A549 (cell line): ENCODE measurements at regions of chr2 and their contacts with region 1.

Region 1: GRCh38 chr2:39227628-39228412 is 15.9 kb downstream of the CDKL4 start:
- DNase-seq: peak; percentile 76 to 79
- ATAC-seq: peak; percentile 84 to 92
- H3K4me3 ChIP-seq: no peak overlapping the region
- H3K27ac ChIP-seq: peak overlapping the region; percentile 19 to 26; a peak in 2 of 6 replicates
- H3K4me1 ChIP-seq: no peaks in the 10 kb centered on the region
- CTCF ChIP-seq: peak; percentile 97
- EP300 ChIP-seq: no peak
- POLR2A ChIP-seq: no peak
- RAD21 ChIP-seq: peak; percentile 85 to 88

Region 2: DNA sequence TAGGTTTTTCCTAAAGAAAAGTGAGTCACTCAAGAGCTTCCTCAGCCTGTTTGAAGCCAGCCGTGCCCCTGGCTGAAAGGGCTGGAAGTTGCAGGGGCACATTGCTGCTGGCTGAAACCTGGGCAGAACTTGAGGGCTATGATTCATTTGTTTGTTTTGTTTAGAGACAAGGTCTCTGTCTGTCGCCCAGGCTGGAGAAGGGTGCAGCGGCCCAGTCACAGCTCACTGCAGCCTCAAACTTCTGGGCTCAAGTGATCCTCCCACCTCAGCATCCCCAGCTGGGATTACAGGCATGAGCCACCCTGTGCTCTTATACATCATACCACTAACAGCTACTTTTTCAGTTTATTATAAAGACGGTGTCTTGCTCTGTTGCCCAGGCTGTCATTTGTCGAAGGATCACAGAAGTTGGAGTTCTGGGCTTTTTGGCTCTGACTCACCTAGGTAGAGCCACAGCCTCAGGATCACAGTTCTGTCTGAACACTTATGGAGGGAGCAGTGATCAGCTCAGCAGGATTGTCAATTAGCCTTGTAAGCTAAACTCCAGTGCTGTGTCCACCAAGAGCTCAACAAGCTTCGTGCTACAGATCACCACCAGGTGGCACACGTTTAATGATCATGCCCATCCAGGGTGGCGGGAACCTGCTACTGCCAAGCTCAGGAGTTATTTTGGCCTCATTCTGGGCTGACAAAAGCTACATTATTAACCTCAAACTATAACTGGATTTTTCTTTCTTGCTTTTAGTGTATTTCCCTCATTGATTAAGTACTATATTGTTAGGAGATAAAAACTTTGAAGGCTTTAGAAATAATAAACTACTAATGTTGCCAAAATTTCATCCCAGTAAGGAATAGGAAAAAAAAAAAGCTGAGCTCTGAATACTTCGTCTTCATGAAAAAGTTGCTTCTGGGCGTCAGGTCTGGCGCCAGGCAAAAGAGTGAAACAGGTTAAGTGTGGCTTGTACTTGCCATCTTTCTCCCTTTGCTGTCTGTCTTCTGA is 280.3 kb before region 1 on chr2:
- CTCF ChIA-PET with region 1: interaction called, 97 read pairs
- POLR2A ChIA-PET with region 1: no interaction called
- DNase-seq: peak; percentile 91 to 95
- ATAC-seq: peak; percentile 95 to 98
- H3K4me3 ChIP-seq: no peak overlapping the region
- H3K27ac ChIP-seq: peak overlapping the region; percentile 23 to 70; a peak in 5 of 6 replicates
- H3K4me1 ChIP-seq: peaks cover 15% of the 10 kb centered on the region
- CTCF ChIP-seq: peak; percentile 92
- EP300 ChIP-seq: no peak
- POLR2A ChIP-seq: no peak
- RAD21 ChIP-seq: peak; percentile 76 to 84

Region 3: GRCh38 chr2:39039072-39039471 is 188.7 kb before region 1 on chr2:
- CTCF ChIA-PET with region 1: interaction called, 11 read pairs
- POLR2A ChIA-PET with region 1: no interaction called
- DNase-seq: no peak
- ATAC-seq: no peak
- H3K4me3 ChIP-seq: no peak overlapping the region
- H3K27ac ChIP-seq: no peak overlapping the region
- H3K4me1 ChIP-seq: no peaks in the 10 kb centered on the region
- CTCF ChIP-seq: no peak
- EP300 ChIP-seq: no peak
- POLR2A ChIP-seq: no peak
- RAD21 ChIP-seq: no peak

Region 4: DNA sequence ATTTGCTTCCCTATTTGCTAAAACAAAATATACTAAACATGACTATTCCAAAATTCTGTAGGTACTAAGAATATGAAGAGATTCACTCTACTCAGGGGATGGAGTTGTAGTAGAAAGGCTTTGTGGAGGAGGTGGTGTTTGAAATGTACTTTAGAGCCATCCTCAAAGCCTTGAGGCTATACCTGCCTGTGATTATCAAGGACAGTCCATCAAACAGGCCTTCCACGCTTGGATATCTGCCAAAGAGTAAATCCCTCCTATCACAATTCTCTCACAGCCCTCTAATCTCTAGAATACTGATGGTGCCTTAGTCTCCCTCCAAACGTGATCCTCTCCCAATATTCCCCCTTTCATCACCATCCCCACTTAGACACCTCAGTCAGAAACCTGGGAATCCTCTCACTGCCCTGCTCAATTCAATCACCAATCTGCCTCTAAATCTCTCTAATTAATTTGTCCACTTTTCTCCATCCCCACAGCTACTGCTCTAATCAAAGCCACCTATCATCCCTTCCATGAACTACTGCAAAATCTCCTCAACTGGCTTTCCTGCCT is 120.0 kb before region 1 on chr2:
- CTCF ChIA-PET with region 1: interaction called, 15 read pairs
- POLR2A ChIA-PET with region 1: no interaction called
- DNase-seq: no peak
- ATAC-seq: peak; percentile 35 to 50; a peak in 4 of 6 replicates
- H3K4me3 ChIP-seq: no peak overlapping the region
- H3K27ac ChIP-seq: no peak overlapping the region
- H3K4me1 ChIP-seq: peaks cover 15% of the 10 kb centered on the region
- CTCF ChIP-seq: no peak
- EP300 ChIP-seq: no peak
- POLR2A ChIP-seq: no peak
- RAD21 ChIP-seq: no peak

Region 5: DNA sequence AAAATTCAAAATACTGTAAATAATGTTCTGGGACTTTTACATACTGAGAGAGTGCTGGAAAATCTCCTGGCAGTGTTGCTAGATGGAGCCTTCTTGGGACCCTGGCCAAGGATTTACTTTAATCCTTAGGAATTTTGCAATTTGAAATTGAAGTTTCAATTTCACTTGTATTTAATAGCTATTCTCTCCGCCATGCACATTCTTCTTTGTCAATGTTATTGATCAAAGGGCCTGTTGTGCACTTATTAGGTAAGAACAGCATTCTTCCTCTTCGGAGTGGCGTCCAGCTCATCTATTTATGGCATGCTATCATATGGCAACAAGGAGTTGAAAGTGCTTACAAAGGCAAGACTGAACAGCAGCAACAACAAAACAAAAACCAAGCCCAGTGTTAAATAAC is 66.8 kb before region 1 on chr2:
- CTCF ChIA-PET with region 1: interaction called, 10 read pairs
- POLR2A ChIA-PET with region 1: no interaction called
- DNase-seq: no peak
- ATAC-seq: no peak
- H3K4me3 ChIP-seq: no peak overlapping the region
- H3K27ac ChIP-seq: no peak overlapping the region
- H3K4me1 ChIP-seq: no peaks in the 10 kb centered on the region
- CTCF ChIP-seq: no peak
- EP300 ChIP-seq: no peak
- POLR2A ChIP-seq: no peak
- RAD21 ChIP-seq: no peak

Region 6: DNA sequence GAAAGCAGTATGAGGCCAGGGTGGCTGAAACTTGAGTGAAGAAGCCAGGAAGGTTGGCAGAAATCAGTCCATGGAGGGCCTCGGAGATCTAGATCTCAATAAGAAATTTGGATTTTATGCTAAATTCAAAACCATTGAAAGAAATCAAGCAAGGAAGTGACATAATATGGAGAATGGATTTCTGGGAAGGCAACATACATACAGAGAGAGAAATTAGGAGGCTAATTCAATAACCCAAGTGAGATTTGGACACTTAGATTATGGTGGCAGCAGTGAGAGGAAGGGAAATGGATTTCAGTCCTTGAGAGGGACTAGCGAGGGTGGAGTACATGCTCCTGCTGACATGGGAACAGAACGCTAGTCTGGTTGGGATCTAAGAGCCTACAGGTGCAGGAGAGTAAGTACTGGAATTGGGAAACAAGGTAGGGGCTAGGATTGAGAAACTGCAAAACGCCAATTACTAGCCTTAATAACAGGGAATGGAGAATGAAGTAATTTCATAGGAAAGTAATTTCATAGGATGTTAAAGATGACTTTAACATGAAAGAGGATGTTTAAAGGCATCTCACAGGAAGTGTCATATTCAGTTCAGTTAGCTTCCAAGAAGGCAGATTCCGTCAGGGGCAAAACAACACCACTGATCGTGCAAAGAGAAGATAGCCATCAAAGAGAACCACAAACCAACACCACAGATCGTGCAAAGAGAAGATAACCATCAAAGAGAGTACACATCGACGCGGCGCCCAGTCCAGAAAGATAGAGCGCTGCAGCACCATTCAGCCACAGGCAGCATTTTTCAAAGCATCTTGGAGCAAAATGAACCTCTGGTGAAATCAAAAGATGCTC is 11.3 kb before region 1 on chr2:
- CTCF ChIA-PET with region 1: interaction called, 33 read pairs
- POLR2A ChIA-PET with region 1: no interaction called
- DNase-seq: no peak
- ATAC-seq: no peak
- H3K4me3 ChIP-seq: no peak overlapping the region
- H3K27ac ChIP-seq: no peak overlapping the region
- H3K4me1 ChIP-seq: no peaks in the 10 kb centered on the region
- CTCF ChIP-seq: no peak
- EP300 ChIP-seq: no peak
- POLR2A ChIP-seq: no peak
- RAD21 ChIP-seq: no peak

Region 7: GRCh38 chr2:39436592-39437510 is 209.0 kb after region 1 on chr2 and contains the start of gene MAP4K3:
- CTCF ChIA-PET with region 1: no interaction called
- POLR2A ChIA-PET with region 1: no interaction called
- DNase-seq: peak; percentile 90 to 97
- ATAC-seq: peak; percentile 89
- H3K4me3 ChIP-seq: peak within 1 kb of the TSS; percentile 74
- H3K27ac ChIP-seq: peak within 1 kb of the TSS; percentile 94 to 96
- H3K4me1 ChIP-seq: peaks cover 56% of the 10 kb centered on the region
- CTCF ChIP-seq: no peak
- EP300 ChIP-seq: no peak
- POLR2A ChIP-seq: peak; percentile 71
- RAD21 ChIP-seq: peak in 1 of 2 experiments; percentile 23; a peak in 2 of 5 replicates
- polyA plus RNA-seq, gene MAP4K3: 44.2 and 44.6 TPM in 2 replicates